Activated B cell treated with CpG ODN at 0.5 μM for 24 hours (primary cell): ENCODE measurements at regions of chr4 and their contacts with region 1.

Region 1: GRCh38 chr4:39446751-39447573 is 11.8 kb downstream of the RPL9 start:
- DNase-seq: peak; percentile 80
- ATAC-seq: peak; percentile 94
- H3K4me3 Mint-ChIP-seq: peak overlapping the region; percentile 83
- H3K27ac Mint-ChIP-seq: peak overlapping the region; percentile 90
- H3K4me1 Mint-ChIP-seq: peaks cover 27% of the 10 kb centered on the region
- H3K27me3 Mint-ChIP-seq: no peaks in the 10 kb centered on the region
- CTCF ChIP-seq: no peak

Region 2: DNA sequence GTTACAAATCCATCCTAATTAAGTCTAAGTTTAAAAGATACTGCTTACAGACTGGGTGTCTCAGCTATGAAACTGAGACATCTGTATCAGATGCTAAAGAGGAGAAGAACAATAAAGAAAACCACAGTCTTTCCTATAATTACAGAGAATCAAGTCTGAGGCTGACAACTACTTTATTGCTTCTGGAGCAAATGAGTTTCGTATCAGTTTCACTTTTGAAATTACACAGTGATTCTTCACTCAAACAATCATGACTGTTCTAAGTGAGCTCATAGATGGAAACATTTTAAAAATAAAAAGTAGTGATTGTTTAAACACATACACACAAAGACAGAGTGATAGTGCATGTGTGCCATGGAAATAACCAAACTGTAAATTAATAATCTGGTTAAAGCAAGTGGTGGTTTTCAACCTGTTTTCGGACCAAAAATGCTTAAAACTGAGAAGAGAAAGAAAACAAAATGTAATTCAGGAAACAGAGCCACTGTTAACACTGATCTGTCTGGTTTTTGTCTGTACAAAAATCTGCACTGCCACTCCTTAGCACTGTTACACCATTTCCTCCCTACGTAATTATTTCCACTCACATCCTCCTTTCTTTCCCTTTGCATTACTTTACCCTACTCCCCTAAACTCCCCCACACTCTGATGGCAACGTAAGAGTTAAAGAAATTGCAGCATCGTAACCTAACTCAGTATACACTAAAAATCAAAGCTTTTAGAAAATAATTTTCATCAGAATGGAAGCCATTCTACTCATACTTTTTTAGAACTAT is 93.3 kb before region 1 on chr4:
- CTCF ChIA-PET with region 1: no interaction called
- POLR2A ChIA-PET with region 1: interaction called, 9 read pairs
- intact Hi-C with region 1: loop called (anchors 1 kb)
- DNase-seq: no peak
- ATAC-seq: peak; percentile 66
- H3K4me3 Mint-ChIP-seq: peak overlapping the region; percentile 69
- H3K27ac Mint-ChIP-seq: peak overlapping the region; percentile 87
- H3K4me1 Mint-ChIP-seq: peaks cover 59% of the 10 kb centered on the region
- H3K27me3 Mint-ChIP-seq: no peaks in the 10 kb centered on the region
- CTCF ChIP-seq: no peak

Region 3: GRCh38 chr4:39458505-39459300 is 11.7 kb after region 1 on chr4 and contains the starts of genes LIAS and RPL9:
- CTCF ChIA-PET with region 1: interaction called, 9 read pairs
- POLR2A ChIA-PET with region 1: interaction called, 94 read pairs
- intact Hi-C with region 1: loop called (anchors 1 kb)
- DNase-seq: peak; percentile 90
- ATAC-seq: peak; percentile 81
- H3K4me3 Mint-ChIP-seq: peak within 1 kb of the TSS; percentile 97
- H3K27ac Mint-ChIP-seq: peak within 1 kb of the TSS; percentile 98
- H3K4me1 Mint-ChIP-seq: peaks cover 36% of the 10 kb centered on the region
- H3K27me3 Mint-ChIP-seq: no peaks in the 10 kb centered on the region
- CTCF ChIP-seq: no peak
- total RNA-seq, gene LIAS: 19.5 and 20.5 TPM in 2 replicates
- total RNA-seq, gene RPL9: 2,632 and 2,865 TPM in 2 replicates